ENCODE measurements at regions of chr10 and their contacts with region 1.

Region 1: DNA sequence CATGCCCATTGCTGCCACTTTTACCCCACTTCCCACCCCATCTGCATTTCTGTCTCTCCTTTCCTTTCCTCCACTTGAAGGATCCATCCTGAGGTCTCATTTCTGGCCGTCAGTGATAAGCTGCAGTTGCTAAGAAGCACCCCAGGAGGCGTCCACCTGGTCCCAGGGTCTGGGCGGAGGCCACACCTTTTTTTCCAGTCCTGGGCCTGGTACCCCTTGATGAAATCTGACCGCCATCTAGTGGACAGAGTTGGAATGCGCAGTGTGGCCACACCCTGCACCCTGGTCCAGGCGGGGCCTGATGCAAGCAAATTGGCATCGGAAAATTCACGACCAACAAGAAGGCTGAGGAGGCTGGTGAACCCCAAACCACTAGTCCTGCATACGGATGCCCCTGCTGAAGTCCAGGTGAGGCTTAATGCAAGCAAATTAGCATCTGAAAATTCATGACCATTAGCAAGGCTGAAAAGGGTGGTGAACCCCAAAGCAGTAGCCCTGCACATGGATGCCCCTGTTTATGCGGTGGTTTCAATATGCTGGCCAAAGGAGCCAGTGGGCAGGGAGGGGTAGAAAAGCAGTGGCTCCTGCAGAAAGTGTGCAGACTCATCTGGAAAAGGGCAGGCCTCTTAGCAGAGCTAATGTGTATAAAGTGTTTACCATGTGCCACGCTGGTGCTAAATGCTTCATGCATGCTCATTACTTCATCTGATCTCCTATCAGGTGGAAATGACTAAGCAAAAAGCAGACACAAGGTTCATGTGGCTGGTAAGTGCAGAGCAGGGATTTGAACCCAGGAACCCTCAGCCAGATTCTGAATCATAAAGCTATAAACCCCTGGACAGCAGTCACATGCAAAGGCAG is 43.2 kb downstream of the GPAM start:
- DNase-seq: peak; percentile 23
- H3K4me3 ChIP-seq: no peak overlapping the region
- H3K27ac ChIP-seq: no peak overlapping the region
- H3K27me3 ChIP-seq: peaks cover 3% of the 10 kb centered on the region
- CTCF ChIP-seq: peak; percentile 93

Region 2: GRCh38 chr10:112122827-112123226 is 17.5 kb before region 1 on chr10:
- CTCF ChIA-PET with region 1: interaction called, 76 read pairs
- POLR2A ChIA-PET with region 1: no interaction called
- DNase-seq: no peak
- H3K4me3 ChIP-seq: no peak overlapping the region
- H3K27ac ChIP-seq: no peak overlapping the region
- H3K27me3 ChIP-seq: peaks cover 5% of the 10 kb centered on the region
- CTCF ChIP-seq: no peak

Region 3: GRCh38 chr10:112160834-112161233 is 20.5 kb after region 1 on chr10:
- CTCF ChIA-PET with region 1: interaction called, 29 read pairs
- POLR2A ChIA-PET with region 1: no interaction called
- DNase-seq: no peak
- H3K4me3 ChIP-seq: no peak overlapping the region
- H3K27ac ChIP-seq: no peak overlapping the region
- H3K27me3 ChIP-seq: no peaks in the 10 kb centered on the region
- CTCF ChIP-seq: no peak

Region 4: GRCh38 chr10:112177247-112177646 is 36.9 kb after region 1 on chr10:
- CTCF ChIA-PET with region 1: interaction called, 23 read pairs
- POLR2A ChIA-PET with region 1: no interaction called
- DNase-seq: no peak
- H3K4me3 ChIP-seq: no peak overlapping the region
- H3K27ac ChIP-seq: no peak overlapping the region
- H3K27me3 ChIP-seq: no peaks in the 10 kb centered on the region
- CTCF ChIP-seq: no peak

Region 5: GRCh38 chr10:112314822-112315474 is 174.6 kb after region 1 on chr10:
- CTCF ChIA-PET with region 1: interaction called, 145 read pairs
- POLR2A ChIA-PET with region 1: no interaction called
- DNase-seq: peak; percentile 55
- H3K4me3 ChIP-seq: no peak overlapping the region
- H3K27ac ChIP-seq: no peak overlapping the region
- H3K27me3 ChIP-seq: peaks cover 9% of the 10 kb centered on the region
- CTCF ChIP-seq: peak; percentile 93

Measured in AG04450 (cell line).